A673 (cell line): ENCODE measurements at regions of chr5 and their contacts with region 1.

Region 1: DNA sequence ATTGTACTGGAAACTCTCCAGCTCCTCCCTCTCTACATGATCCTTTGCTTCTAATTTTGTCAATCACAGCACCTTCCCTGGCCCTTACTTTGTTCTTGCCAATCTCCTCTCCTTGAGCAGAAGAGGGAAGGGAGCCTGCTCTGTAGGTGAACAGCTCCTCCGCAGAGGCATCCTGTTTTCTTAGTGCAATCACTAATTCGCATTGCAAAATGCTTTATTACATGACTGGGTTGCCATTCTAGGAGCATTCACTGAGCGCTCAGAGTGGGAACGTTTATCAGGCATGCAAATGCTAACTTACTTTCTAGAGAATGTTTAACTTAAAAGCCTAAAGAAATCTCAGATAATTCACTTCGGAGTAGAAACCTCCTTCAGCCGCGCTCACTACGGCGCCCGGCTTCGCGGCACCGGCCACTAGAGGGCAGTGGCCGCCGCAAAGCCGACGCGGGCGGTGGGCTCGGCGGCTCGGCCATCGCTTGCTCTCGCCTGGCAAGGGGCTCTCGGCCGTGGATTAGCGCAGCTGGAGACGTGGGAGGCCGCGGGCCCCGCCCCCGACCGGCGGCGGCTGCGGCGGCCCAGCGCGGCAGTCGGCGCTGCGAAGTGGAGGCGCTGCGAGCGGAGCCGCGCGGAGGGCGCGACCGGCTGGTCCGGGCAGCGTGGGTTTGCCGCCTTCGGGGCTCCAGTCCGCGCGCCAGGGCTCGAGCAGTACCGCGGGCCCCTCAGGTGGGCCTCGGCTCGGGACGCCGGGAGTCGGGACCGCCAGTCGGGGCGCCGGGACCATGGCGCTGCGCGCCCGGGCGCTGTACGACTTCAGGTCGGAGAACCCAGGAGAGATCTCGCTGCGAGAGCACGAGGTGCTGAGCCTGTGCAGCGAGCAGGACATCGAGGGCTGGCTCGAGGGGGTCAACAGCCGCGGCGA is at the start of gene SNX18:
- DNase-seq: peak; percentile 97
- H3K4me3 ChIP-seq: peak within 1 kb of the TSS; percentile 71
- H3K27ac ChIP-seq: peak within 1 kb of the TSS; percentile 96
- H3K4me1 ChIP-seq: peaks cover 24% of the 10 kb centered on the region
- H3K27me3 ChIP-seq: no peaks in the 10 kb centered on the region
- CTCF ChIP-seq: peak; percentile 91
- total RNA-seq, gene SNX18: 140 and 143 TPM in 2 replicates

Region 2: GRCh38 chr5:53425598-53426511 is 1091.6 kb before region 1 on chr5:
- CTCF ChIA-PET with region 1: no interaction called
- POLR2A ChIA-PET with region 1: no interaction called
- intact Hi-C with region 1: no loop called
- DNase-seq: peak; percentile 74
- H3K4me3 ChIP-seq: no peak overlapping the region
- H3K27ac ChIP-seq: no peak overlapping the region
- H3K4me1 ChIP-seq: no peaks in the 10 kb centered on the region
- H3K27me3 ChIP-seq: no peaks in the 10 kb centered on the region
- CTCF ChIP-seq: peak; percentile 72

Region 3: DNA sequence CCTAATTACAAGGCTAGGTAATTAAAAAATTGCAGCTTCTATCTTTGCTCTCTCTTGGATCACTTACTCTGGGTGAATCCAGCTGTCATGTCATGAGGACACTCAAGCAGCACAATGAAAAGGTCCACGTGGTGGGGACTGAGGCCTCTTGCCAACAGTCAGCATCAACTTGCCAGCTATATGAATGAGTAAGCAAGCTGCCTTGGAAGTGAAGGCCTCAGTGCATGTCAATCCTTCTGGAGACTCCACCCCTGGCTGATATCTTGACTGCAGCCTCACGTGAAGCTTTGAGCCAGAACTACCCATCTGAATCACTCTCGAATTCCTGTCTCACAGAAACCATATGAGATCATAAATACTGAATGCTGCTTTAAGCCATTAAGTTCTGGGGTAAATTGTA is 140.6 kb after region 1 on chr5:
- CTCF ChIA-PET with region 1: no interaction called
- POLR2A ChIA-PET with region 1: no interaction called
- intact Hi-C with region 1: loop called (anchors 1 kb)
- DNase-seq: peak; percentile 85
- H3K4me3 ChIP-seq: no peak overlapping the region
- H3K27ac ChIP-seq: no peak overlapping the region
- H3K4me1 ChIP-seq: peaks cover 34% of the 10 kb centered on the region
- H3K27me3 ChIP-seq: no peaks in the 10 kb centered on the region
- CTCF ChIP-seq: no peak

Region 4: DNA sequence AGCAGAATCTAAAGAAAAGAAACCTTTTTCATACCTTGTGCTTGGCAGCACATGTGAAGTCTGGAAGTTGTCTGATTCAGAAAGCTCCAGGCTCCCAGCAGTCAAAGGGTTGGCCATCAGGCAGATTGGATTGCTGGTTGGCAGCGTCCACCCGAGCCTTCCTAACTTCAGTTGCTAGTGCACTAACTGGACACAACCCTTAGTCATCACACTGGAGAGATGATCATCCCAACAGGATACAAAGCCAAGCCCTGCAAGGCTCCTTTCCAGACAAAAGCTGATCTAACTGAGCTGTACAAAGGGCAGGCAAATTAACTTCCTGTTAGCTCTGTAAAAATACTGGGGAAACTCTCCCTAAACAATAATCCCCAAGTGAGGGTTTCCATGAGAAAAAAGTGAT is 185.7 kb after region 1 on chr5:
- CTCF ChIA-PET with region 1: no interaction called
- POLR2A ChIA-PET with region 1: no interaction called
- intact Hi-C with region 1: loop called (anchors 5 kb)
- DNase-seq: peak; percentile 83
- H3K4me3 ChIP-seq: no peak overlapping the region
- H3K27ac ChIP-seq: peak overlapping the region; percentile 69
- H3K4me1 ChIP-seq: peaks cover 52% of the 10 kb centered on the region
- H3K27me3 ChIP-seq: no peaks in the 10 kb centered on the region
- CTCF ChIP-seq: no peak

Region 5: DNA sequence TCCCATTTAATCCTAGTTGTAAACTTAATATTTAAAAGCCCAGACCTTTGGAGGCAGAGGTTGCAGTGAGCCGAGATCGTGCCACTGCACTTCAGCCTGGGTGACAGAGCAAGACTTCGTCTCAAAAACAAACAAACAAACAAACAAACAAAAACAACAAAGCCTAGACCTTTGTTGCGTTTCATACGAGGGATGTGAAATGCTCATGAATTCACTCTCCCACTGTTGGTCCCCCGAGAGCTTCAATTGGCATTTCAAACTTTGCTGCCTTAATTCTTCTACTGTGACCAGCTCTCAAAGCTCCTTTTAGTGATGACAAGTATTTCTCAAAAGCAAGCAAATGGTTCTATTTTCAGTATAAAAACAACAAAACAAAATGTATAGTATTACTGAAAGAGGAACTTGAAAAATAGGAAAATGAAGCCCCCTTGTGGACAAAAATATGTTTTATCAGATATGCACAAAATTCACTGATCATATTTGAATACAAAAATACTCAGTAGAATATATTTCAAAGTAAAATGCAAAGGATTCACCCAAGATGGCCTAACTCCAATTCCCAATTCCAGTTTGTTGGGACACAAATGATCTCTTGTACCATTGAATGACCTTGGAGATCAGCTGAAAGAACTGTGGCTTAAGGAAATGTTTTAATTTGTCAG is 327.6 kb after region 1 on chr5:
- CTCF ChIA-PET with region 1: interaction called, 28 read pairs
- POLR2A ChIA-PET with region 1: interaction called, 3 read pairs
- intact Hi-C with region 1: loop called (anchors 1 kb)
- DNase-seq: peak; percentile 83
- H3K4me3 ChIP-seq: peak overlapping the region; percentile 25
- H3K27ac ChIP-seq: peak overlapping the region; percentile 82
- H3K4me1 ChIP-seq: peaks cover 66% of the 10 kb centered on the region
- H3K27me3 ChIP-seq: no peaks in the 10 kb centered on the region
- CTCF ChIP-seq: peak; percentile 76

Region 6: GRCh38 chr5:54867310-54867944 is 350.0 kb after region 1 on chr5:
- CTCF ChIA-PET with region 1: interaction called, 29 read pairs
- POLR2A ChIA-PET with region 1: no interaction called
- intact Hi-C with region 1: loop called (anchors 1 kb)
- DNase-seq: peak; percentile 87
- H3K4me3 ChIP-seq: no peak overlapping the region
- H3K27ac ChIP-seq: peak overlapping the region; percentile 2
- H3K4me1 ChIP-seq: peaks cover 9% of the 10 kb centered on the region
- H3K27me3 ChIP-seq: no peaks in the 10 kb centered on the region
- CTCF ChIP-seq: peak; percentile 78

Region 7: DNA sequence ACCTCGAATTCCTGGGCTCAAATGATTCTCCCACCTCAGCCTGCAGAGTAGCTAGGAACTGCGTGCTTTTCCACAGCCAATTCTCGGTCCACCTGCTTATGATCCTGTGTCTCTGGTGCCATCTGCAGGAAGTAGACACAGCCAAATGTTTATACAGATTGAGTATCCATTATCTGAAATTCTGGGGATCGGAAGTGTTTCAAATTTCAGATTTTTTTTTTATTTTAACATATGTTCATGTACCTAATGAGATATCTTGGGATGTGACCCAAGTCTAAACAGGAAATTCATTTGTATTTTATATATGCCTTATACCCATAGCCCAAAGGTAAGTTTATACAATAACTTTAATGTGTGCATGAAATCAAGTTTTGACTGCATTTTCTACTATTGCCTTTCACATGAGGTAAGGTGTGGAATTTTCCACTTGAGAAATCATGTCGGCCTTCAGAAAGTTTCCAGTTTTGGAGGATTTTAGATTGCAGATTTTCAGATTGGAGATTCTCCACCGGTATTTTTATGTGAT is 378.4 kb after region 1 on chr5:
- CTCF ChIA-PET with region 1: interaction called, 5 read pairs
- POLR2A ChIA-PET with region 1: no interaction called
- intact Hi-C with region 1: loop called (anchors 1 kb)
- DNase-seq: peak; percentile 86
- H3K4me3 ChIP-seq: no peak overlapping the region
- H3K27ac ChIP-seq: peak overlapping the region; percentile 74
- H3K4me1 ChIP-seq: peaks cover 16% of the 10 kb centered on the region
- H3K27me3 ChIP-seq: no peaks in the 10 kb centered on the region
- CTCF ChIP-seq: peak; percentile 78

Region 8: GRCh38 chr5:55146543-55147151 is 629.2 kb after region 1 on chr5:
- CTCF ChIA-PET with region 1: interaction called, 8 read pairs
- POLR2A ChIA-PET with region 1: no interaction called
- intact Hi-C with region 1: loop called (anchors 10 kb)
- DNase-seq: peak; percentile 91
- H3K4me3 ChIP-seq: no peak overlapping the region
- H3K27ac ChIP-seq: no peak overlapping the region
- H3K4me1 ChIP-seq: no peaks in the 10 kb centered on the region
- H3K27me3 ChIP-seq: peaks cover 27% of the 10 kb centered on the region
- CTCF ChIP-seq: peak; percentile 94